Activated naive CD4-positive, alpha-beta T cell treated with anti-CD3 and anti-CD28 coated beads for 36 hours (primary cell): ENCODE measurements at regions of chr15 and their contacts with region 1.

Region 1: DNA sequence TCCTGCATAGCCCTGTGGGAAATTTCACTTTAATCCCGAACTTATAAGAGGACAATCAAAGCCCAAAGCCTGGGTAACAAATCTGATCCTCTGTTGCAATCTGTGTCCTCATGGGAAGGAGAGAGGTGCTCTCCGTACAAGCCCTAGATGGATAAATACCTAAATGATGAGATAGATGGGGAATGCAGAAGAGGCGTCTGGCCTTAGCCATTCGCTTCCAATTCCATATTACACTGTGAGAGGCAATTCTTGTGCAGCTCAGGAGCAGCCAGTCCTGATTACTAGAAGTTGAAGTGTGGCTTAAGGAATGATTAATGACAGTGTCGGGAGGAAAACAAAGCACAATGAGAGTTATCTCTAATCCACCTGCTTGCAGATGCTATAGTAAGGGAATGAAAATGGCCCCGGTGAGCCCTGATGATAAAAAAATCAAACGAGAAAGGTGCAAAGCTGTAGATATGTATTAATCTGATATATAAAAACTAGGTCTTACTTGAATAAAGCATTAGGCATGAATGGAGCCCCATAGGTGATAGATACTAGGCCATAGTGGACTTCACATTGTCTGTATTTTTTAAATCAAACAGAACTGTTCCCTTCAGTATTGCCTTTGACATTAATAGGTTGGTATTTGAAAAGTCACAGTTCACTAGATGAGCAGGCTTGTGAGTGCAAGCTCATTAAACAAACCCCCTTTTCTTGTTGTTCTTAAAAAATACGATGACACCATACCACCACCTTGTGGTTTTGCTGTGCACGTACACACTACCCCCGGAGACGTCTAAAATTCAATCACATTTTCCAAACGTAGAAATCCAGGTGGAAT is 54.2 kb upstream of the TMCO5A start:
- DNase-seq: peak; percentile 6
- H3K4me3 Mint-ChIP-seq: no peak overlapping the region
- H3K27ac Mint-ChIP-seq: no peak overlapping the region
- H3K4me1 Mint-ChIP-seq: no peaks in the 10 kb centered on the region
- H3K27me3 Mint-ChIP-seq: peaks cover 9% of the 10 kb centered on the region

Region 2: DNA sequence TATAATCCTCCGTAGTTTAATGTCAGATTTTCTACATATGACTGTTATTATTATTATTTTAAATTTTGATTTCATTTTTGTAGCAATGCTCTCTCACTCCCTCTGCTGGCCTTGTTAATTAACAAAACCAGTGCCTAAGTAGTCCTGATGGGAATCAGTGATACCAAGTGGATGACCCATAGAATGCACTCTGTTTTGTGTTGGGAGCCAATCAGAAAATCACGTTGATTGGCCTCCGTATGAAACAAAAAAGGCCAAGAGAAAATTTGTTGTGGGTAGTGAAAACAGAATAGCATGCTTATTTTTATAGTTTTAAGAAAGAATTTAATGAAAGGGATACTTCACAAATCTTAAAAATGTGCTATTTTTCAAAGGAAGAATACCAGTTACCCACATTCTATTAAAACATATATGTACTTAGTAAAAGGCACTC is 745.5 kb before region 1 on chr15:
- CTCF ChIA-PET with region 1: no interaction called
- intact Hi-C with region 1: loop called (anchors 10 kb)
- DNase-seq: no peak
- H3K4me3 Mint-ChIP-seq: no peak overlapping the region
- H3K27ac Mint-ChIP-seq: no peak overlapping the region
- H3K4me1 Mint-ChIP-seq: no peaks in the 10 kb centered on the region
- H3K27me3 Mint-ChIP-seq: peaks cover 26% of the 10 kb centered on the region

Region 3: DNA sequence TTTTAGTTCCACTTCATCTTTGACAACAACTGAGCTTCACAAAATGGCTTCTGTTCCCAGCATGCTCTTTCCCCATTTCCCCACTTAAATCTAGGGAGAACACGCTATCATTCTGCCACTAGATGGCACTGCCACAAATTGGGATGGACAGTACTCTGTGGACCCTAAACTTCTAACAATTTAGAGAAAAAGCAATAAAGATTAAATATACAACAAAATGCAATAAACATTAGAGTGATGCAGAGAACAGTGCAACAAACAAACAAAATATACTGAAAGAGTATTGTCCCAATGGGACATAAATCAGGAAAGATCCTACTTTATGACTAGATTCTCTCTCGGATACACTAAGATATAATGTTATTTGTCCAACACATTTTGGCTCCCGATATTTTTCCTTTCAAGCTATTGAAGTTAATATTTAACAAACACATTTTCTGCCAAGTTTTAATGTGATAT is 115.5 kb before region 1 on chr15:
- CTCF ChIA-PET with region 1: interaction called, 8 read pairs
- intact Hi-C with region 1: loop called (anchors 5 kb)
- DNase-seq: peak; percentile 53
- H3K4me3 Mint-ChIP-seq: no peak overlapping the region
- H3K27ac Mint-ChIP-seq: no peak overlapping the region
- H3K4me1 Mint-ChIP-seq: peaks cover 4% of the 10 kb centered on the region
- H3K27me3 Mint-ChIP-seq: peaks cover 2% of the 10 kb centered on the region